Activated B cell treated with CpG ODN at 0.5 μM for 24 hours (primary cell): ENCODE measurements at regions of chr15 and their contacts with region 1.

Region 1: GRCh38 chr15:50627351-50628055 is 59.1 kb downstream of the TRPM7 start:
- DNase-seq: no peak
- ATAC-seq: no peak
- H3K4me3 Mint-ChIP-seq: no peak overlapping the region
- H3K27ac Mint-ChIP-seq: no peak overlapping the region
- H3K4me1 Mint-ChIP-seq: peaks cover 2% of the 10 kb centered on the region
- H3K27me3 Mint-ChIP-seq: no peaks in the 10 kb centered on the region
- CTCF ChIP-seq: no peak

Region 2: DNA sequence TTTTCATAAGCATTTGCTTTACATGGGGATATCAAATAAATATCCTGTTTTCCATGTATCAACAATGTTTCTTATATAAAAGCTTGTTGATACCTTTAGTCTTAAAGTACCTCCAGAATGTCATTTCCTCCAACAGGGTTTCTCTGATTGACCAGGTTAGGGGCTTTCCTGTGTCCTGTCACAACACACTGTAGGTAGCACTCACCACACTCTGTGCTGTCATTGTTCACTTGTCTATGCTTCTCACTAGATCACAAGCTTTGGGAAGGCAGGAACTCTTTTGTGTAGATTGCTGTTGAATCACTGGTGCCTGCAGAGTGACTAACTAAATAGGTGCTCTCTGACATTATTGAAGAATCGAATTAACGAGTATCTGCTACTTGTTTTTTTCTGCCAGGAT is 130.8 kb before region 1 on chr15:
- CTCF ChIA-PET with region 1: no interaction called
- POLR2A ChIA-PET with region 1: no interaction called
- intact Hi-C with region 1: loop called (anchors 10 kb)
- DNase-seq: no peak
- ATAC-seq: no peak
- H3K4me3 Mint-ChIP-seq: no peak overlapping the region
- H3K27ac Mint-ChIP-seq: no peak overlapping the region
- H3K4me1 Mint-ChIP-seq: peaks cover 13% of the 10 kb centered on the region
- H3K27me3 Mint-ChIP-seq: no peaks in the 10 kb centered on the region
- CTCF ChIP-seq: no peak

Region 3: GRCh38 chr15:50876989-50877360 is 249.5 kb after region 1 on chr15:
- CTCF ChIA-PET with region 1: interaction called, 3 read pairs
- POLR2A ChIA-PET with region 1: no interaction called
- intact Hi-C with region 1: loop called (anchors 1 kb)
- DNase-seq: peak; percentile 27
- ATAC-seq: peak; percentile 45
- H3K4me3 Mint-ChIP-seq: peak overlapping the region; percentile 82
- H3K27ac Mint-ChIP-seq: peak overlapping the region; percentile 27
- H3K4me1 Mint-ChIP-seq: peaks cover 39% of the 10 kb centered on the region
- H3K27me3 Mint-ChIP-seq: peaks cover 4% of the 10 kb centered on the region
- CTCF ChIP-seq: peak; percentile 98

Region 4: GRCh38 chr15:50890771-50891558 is 263.5 kb after region 1 on chr15:
- CTCF ChIA-PET with region 1: no interaction called
- POLR2A ChIA-PET with region 1: interaction called, 11 read pairs
- intact Hi-C with region 1: no loop called
- DNase-seq: no peak
- ATAC-seq: no peak
- H3K4me3 Mint-ChIP-seq: no peak overlapping the region
- H3K27ac Mint-ChIP-seq: no peak overlapping the region
- H3K4me1 Mint-ChIP-seq: peaks cover 2% of the 10 kb centered on the region
- H3K27me3 Mint-ChIP-seq: no peaks in the 10 kb centered on the region
- CTCF ChIP-seq: no peak